Left cardiac atrium (tissue), 4 donors: ENCODE measurements at regions of chr17 and their contacts with region 1.

Region 1: GRCh38 chr17:18217412-18218015 is 7.9 kb upstream of the LLGL1 start:
- DNase-seq: peak; percentile 77
- ATAC-seq: peak; percentile 83

Region 2: DNA sequence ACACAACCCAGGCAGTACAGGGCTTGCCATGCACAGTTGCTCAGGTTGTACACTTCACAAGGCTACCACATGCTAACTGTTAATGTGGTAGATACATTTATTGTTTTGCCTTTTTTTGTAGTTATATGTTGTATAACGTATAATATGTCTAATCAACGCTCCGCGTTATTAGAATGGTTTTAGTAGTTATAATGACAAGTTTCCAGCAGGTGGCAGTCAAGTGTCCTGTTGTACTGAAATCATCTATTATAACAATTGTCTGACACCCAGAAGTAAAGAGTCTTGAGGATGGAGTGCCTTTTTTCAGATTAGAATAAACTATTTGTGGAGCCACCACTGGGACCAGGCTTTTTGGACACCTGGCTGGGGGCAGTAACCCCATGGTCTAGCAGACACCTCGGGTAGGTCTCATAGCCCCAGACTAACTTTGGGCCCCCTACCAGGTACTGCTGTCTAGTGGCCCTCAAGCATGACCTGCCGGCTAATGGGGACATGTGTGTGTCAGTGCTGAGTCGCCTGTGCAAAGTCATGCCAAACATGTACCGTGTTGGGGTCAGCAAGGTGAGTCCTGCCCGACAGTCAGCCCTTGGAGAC is 76.2 kb before region 1 on chr17:
- intact Hi-C with region 1: loop called in 1 of 2 experiments (anchors 10 kb)
- DNase-seq: no peak
- ATAC-seq: peak; percentile 19 to 20

Region 3: GRCh38 chr17:18187821-18188761 is 29.4 kb before region 1 on chr17:
- intact Hi-C with region 1: loop called in 1 of 2 experiments (anchors 2 kb)
- DNase-seq: no peak
- ATAC-seq: peak in 1 of 2 donors; percentile 6

Region 4: DNA sequence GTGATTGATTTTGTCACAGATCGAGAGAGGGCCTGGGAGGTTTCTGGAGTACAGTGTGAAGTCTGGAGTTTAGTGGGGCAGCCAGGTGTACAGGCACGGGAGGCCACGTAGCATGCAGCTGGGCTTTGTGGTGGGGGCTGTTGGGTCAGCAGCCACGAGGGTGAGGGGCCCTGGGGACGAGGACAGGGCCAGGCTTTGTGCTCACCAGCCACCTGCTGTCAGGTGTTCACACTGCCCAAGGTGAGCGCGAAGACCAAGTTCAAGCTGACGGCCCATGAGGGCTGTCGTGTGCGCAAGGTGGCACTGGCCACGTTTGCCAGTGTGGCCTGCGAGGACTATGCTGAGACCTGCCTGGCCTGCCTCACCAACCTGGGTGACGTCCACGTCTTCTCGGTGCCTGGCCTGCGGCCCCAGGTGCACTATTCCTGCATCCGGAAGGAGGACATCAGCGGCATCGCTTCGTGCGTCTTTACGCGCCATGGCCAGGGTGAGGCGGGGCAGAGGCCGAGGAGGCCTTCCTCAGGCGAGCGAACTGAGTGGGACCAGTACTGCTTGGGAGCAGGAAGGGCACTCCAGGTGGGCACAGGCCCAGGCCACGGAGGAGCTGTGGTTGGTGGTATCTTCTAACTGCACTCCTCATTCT is 23.8 kb after region 1 on chr17:
- intact Hi-C with region 1: no loop called
- DNase-seq: no peak
- ATAC-seq: no peak

Region 5: GRCh38 chr17:18257982-18258355 is 40.5 kb after region 1 on chr17:
- intact Hi-C with region 1: loop called in 1 of 2 experiments (anchors 5 kb)
- DNase-seq: peak; percentile 87
- ATAC-seq: peak; percentile 68 to 82

Region 6: DNA sequence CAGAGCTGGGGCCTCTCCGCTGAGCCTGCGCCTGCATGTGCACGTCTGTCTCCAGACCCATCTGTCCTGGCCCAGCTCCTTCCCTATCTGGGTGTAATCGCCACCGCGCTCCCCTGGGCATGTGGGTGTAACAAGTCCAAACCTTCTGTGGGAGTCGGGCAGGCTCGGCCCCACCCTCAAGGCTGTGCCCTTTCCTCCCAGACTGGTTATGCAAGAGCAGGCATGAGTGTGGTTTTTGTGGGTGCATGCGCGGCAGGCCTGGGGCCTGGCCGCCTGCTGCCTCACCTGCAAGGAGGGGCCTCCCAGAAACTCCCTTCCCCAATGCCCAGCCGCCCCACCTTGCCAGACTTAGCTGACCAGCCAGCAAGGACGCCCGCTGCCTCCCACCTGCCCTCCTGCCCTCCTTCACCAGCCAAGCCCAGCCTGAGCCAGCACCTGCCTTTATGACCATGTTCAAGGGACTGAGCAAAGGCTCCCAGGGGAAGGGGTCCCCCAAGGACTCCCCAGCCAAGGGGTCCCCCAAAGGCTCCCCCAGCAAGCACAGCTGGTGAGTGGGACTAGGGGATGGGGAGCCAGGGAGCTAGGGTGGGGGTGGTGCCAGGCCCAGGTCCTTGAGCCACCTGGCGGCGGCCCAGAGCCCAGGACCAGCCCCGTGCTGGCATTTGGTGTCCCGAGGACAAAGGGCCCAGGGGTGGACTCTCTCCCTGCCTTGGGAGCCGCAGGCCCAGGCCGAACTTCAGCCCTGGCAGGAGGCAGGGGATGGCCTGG is 160.1 kb after region 1 on chr17 and contains the start of gene EVPLL:
- intact Hi-C with region 1: no loop called
- DNase-seq: peak; percentile 34
- ATAC-seq: peak; percentile 86 to 87
- total RNA-seq, gene EVPLL: not detected